ENCODE measurements at regions of chr6 and their contacts with region 1.

Region 1: GRCh38 chr6:32868257-32868788 is 14.3 kb downstream of the PSMB9 start:
- DNase-seq: peak; percentile 52
- CTCF ChIP-seq: peak; percentile 88

Region 2: DNA sequence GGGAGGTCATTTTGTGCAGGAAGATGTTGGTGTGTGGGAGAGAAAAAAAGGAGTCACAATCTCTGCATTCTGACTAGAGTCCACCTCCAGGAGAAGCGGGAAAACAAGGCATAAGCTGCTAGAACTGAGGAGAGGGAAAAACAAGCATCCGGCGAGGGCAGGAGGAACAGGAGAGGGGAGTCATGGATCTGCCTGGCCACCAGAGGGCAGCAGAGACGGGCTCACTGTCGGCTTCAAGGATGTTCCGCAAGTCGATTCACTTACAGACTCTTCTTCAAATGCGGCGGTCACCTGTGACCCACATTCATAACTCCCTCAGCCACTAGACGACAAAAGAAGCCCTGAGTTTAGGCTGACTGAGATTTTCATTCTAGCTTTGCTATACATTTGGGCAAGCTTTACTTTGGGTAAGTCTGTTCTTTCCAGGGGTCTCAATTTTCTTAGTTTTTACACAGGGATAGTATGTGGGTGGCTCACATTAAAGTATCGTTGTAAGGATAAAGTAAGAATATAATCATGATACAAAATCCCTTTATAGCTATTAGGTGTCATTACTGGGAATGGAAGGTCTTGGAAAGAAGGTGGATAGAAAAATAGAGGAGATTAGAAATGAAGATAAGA is 454.8 kb before region 1 on chr6:
- CTCF ChIA-PET with region 1: interaction called, 62 read pairs
- POLR2A ChIA-PET with region 1: no interaction called
- DNase-seq: peak; percentile 80
- CTCF ChIP-seq: peak; percentile 92

Region 3: GRCh38 chr6:32796848-32797776 is 71.2 kb before region 1 on chr6:
- CTCF ChIA-PET with region 1: interaction called, 27 read pairs
- POLR2A ChIA-PET with region 1: no interaction called
- DNase-seq: peak; percentile 56
- CTCF ChIP-seq: peak; percentile 73

Region 4: GRCh38 chr6:32838114-32838958 is 30.0 kb before region 1 on chr6 and contains the start of gene TAP2:
- CTCF ChIA-PET with region 1: interaction called, 339 read pairs
- POLR2A ChIA-PET with region 1: interaction called, 10 read pairs
- DNase-seq: peak; percentile 94
- CTCF ChIP-seq: peak; percentile 98

Region 5: DNA sequence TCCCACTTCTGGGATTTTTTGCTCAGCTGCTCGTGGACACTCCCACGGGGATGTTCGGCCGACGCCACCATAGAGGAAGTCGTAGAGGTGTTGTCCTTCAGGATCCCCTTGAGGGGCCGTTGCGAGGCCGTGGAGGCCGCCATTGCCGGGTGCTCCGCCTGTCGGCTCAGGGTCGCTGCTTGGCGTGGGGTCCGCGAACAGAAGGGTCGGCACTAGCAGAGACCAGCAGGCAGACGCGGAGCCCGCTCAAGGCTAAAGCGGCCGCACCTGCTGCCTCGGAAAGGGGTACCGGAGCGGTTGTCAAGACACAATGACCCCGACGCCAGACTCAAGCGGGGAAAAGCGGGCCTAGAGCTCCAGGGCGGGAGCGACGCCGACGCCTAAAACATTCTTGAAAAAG is 11.4 kb after region 1 on chr6:
- CTCF ChIA-PET with region 1: interaction called, 38 read pairs
- POLR2A ChIA-PET with region 1: no interaction called
- DNase-seq: no peak
- CTCF ChIP-seq: no peak

Region 6: GRCh38 chr6:32912951-32913350 is 44.6 kb after region 1 on chr6:
- CTCF ChIA-PET with region 1: interaction called, 14 read pairs
- POLR2A ChIA-PET with region 1: no interaction called
- DNase-seq: no peak
- CTCF ChIP-seq: no peak

Region 7: DNA sequence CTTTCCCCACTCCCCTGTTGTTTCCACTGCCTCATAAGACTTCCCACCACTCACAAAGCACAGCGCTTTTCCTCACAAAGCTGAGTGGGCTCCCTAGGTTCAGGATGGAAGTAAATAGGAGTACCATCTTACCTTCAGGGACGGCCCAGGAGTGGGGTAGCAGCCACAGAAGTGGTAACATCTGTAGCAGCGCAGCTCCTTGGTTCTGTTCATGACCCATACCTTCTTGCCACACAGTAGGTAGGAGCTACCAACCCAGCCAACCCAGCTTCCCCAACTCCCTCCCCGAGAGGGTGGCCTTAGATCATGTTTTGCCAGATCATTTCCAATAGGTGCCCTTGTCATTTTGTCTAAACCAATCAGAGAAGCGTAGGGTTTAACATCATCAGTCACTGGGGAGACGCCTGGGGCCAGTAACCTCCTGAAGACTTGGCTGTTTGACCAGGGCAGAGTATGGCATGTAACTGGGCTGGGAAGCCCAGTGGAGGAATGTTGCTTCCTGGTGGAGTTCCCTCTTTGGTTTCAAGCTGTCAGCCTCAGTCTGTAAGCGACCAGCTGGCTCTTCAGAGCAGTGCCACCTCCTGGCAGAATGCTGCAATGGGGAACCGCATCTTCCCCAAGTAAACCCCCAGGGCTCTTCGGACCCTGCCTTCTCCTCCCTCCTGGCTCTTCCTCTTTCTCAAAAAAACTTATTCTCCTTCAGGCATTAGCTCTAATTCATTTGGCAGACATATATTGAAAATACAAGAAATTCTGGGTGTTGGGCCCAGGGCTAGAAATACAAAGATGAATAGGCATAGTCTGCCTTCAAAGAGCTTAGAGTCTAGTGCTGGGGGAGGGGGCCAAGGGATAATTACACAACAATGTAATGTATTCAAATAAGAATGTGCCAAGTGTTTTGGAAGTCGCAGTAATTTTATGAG is 84.8 kb after region 1 on chr6 and contains the start of gene HLA-DMA:
- CTCF ChIA-PET with region 1: interaction called, 25 read pairs
- POLR2A ChIA-PET with region 1: no interaction called
- DNase-seq: peak; percentile 86
- CTCF ChIP-seq: peak; percentile 56